AG04449 (cell line): ENCODE measurements at regions of chr15 and their contacts with region 1.

Region 1: GRCh38 chr15:62403164-62403809 is 238.2 kb upstream of the C2CD4B start:
- DNase-seq: no peak
- H3K4me3 ChIP-seq: no peak overlapping the region
- CTCF ChIP-seq: no peak

Region 2: DNA sequence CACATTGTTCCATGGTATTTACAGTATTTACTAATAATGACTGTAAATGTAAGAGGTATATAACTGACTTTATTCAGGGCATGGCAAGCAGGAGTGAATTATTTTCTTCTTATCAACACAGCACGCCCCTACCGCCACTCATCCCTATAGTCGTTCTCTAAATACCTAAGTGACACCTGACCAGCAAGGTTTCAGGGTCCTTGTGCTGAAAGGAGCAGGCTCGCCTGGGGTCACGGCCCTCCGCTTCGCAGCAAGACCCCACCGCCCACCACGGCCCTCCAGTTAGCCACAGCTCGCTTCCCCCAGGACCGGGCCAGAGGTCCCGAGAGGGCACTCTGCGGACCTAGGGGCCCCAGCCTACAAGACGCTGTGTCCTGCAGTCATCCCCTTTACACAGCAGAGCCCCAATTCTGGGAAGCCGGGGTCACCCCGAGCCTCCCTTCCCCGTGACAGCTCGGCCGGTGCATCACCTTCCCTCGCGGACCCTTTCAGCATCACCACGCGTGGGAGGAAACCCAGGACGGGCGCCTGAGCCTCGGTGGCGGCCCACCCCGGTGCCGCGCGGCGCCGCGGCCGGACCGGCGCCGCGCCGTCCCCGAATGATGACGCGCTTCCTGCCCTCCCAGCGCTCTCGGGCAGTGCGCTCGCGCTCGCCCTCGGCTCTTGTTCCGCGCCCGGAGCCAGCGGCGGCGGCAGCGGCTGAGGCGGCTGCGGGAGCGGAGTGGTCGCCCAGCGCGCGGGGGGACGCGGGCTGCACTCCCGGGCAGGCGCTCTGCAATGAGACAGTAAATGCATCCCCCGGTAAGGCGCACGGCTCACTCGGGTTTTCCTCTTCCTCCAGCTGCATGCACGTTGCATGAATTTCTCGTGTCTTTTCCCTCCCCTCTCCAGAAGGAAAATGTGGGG is 13.1 kb before region 1 on chr15:
- CTCF ChIA-PET with region 1: interaction called, 16 read pairs
- POLR2A ChIA-PET with region 1: interaction called, 4 read pairs
- DNase-seq: no peak
- H3K4me3 ChIP-seq: peak within 1 kb of the TSS; percentile 90
- CTCF ChIP-seq: no peak

Region 3: DNA sequence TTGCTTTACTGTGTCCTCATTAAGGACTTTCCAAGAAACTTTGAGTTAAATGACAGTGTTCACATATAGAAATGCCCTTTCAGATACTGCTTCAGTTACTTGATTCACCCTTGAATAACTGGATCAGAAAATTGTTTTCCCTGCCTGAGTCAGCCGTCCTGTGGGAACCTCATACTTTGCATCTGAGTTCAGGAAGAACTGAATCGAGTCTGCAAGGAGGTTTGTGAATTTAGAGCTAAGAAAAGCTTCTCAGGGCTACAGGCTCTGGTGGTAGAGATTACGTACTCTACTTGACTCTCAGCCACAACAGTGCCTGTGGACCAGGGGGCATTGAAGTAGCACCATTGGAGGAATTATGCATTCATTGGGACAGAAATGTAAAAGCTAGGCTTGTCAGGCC is 14.2 kb after region 1 on chr15:
- CTCF ChIA-PET with region 1: interaction called, 10 read pairs
- POLR2A ChIA-PET with region 1: interaction called, 3 read pairs
- DNase-seq: no peak
- H3K4me3 ChIP-seq: no peak overlapping the region
- CTCF ChIP-seq: no peak